CD8-positive, alpha-beta T cell (primary cell): ENCODE measurements at regions of chr9 and their contacts with region 1.

Region 1: DNA sequence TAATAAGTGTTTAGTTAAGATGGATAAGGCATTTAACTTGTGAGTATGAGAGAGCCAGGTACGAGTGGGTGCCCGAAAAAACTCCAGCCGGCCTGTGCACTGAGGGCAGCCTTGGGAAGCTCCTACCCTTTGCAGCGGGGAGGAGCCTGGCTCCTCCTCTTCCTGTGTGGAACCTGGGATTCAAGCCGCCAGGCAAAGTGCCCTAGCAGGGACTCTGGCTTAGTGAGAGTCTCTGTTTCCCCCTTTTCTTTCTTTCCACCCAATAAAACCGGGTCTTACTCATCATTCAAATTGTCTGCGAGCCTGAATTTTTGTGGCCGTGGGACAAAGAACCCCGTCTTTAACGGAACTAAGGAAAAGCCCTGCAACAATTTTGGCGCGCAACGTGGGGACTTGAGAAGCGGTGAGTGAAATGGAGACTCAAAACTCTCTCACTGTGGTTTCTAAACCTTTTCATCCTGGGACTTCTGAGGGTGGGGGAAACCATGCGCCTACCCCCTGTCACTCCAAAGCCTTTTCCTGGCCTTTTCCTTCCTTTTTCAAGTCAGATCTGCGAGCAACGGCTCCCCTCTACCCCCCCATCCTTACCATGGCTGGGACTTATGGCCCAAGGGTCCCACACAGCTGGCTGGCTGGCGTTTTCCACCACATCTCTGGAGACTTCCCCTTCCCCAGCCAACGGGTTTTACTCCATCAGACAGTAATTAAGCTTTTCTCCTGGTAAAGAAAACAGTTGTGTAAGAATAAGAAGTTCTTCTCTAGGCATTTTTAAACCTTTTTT is 535.7 kb upstream of the ACO1 start:
- DNase-seq: no peak
- ATAC-seq: no peak
- H3K4me3 ChIP-seq: no peak overlapping the region
- H3K4me3 Mint-ChIP-seq: no peak overlapping the region
- H3K27ac ChIP-seq: no peak overlapping the region
- H3K27ac Mint-ChIP-seq: no peak overlapping the region
- H3K4me1 ChIP-seq: no peaks in the 10 kb centered on the region
- H3K4me1 Mint-ChIP-seq: no peaks in the 10 kb centered on the region
- H3K27me3 ChIP-seq: no peaks in the 10 kb centered on the region
- H3K27me3 Mint-ChIP-seq: no peaks in the 10 kb centered on the region
- CTCF ChIP-seq: no peak

Region 2: DNA sequence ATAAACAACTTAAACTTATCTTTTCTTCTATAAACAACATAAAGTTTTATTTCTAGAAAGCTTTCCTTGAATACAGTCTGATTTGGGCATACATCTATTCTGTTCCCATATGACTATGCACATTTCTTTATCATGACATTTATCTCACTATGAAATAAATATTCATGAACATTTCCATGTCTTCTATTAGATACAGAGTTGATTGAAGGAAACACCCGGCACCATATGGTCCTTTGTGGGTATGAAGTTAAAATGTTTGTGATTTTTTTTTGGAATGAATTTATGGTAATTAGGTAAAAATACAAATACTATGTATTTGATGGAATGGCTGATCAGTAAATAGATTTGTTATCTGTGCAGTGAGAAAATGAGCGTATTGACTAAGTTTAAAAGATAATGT is 674.0 kb before region 1 on chr9:
- CTCF ChIA-PET with region 1: no interaction called
- POLR2A ChIA-PET with region 1: no interaction called
- intact Hi-C with region 1: no loop called
- DNase-seq: no peak
- ATAC-seq: no peak
- H3K4me3 ChIP-seq: no peak overlapping the region
- H3K4me3 Mint-ChIP-seq: no peak overlapping the region
- H3K27ac ChIP-seq: no peak overlapping the region
- H3K27ac Mint-ChIP-seq: no peak overlapping the region
- H3K4me1 ChIP-seq: no peaks in the 10 kb centered on the region
- H3K4me1 Mint-ChIP-seq: no peaks in the 10 kb centered on the region
- H3K27me3 ChIP-seq: no peaks in the 10 kb centered on the region
- H3K27me3 Mint-ChIP-seq: no peaks in the 10 kb centered on the region
- CTCF ChIP-seq: no peak

Region 3: GRCh38 chr9:31377358-31377757 is 471.3 kb before region 1 on chr9:
- CTCF ChIA-PET with region 1: no interaction called
- POLR2A ChIA-PET with region 1: no interaction called
- intact Hi-C with region 1: no loop called
- DNase-seq: no peak
- ATAC-seq: no peak
- H3K4me3 ChIP-seq: no peak overlapping the region
- H3K4me3 Mint-ChIP-seq: no peak overlapping the region
- H3K27ac ChIP-seq: no peak overlapping the region
- H3K27ac Mint-ChIP-seq: no peak overlapping the region
- H3K4me1 ChIP-seq: no peaks in the 10 kb centered on the region
- H3K4me1 Mint-ChIP-seq: no peaks in the 10 kb centered on the region
- H3K27me3 ChIP-seq: no peaks in the 10 kb centered on the region
- H3K27me3 Mint-ChIP-seq: no peaks in the 10 kb centered on the region
- CTCF ChIP-seq: no peak

Region 4: GRCh38 chr9:31783491-31783890 is 65.2 kb before region 1 on chr9:
- CTCF ChIA-PET with region 1: no interaction called
- POLR2A ChIA-PET with region 1: no interaction called
- intact Hi-C with region 1: loop called in 1 of 2 experiments (anchors 10 kb)
- DNase-seq: no peak
- ATAC-seq: no peak
- H3K4me3 ChIP-seq: no peak overlapping the region
- H3K4me3 Mint-ChIP-seq: no peak overlapping the region
- H3K27ac ChIP-seq: no peak overlapping the region
- H3K27ac Mint-ChIP-seq: no peak overlapping the region
- H3K4me1 ChIP-seq: no peaks in the 10 kb centered on the region
- H3K4me1 Mint-ChIP-seq: peaks cover 4% of the 10 kb centered on the region
- H3K27me3 ChIP-seq: no peaks in the 10 kb centered on the region
- H3K27me3 Mint-ChIP-seq: no peaks in the 10 kb centered on the region
- CTCF ChIP-seq: no peak